Adrenal gland (tissue), 19 donors: ENCODE measurements at regions of chr3 and their contacts with region 1.

Region 1: GRCh38 chr3:55485211-55485791 is 1.8 kb downstream of the WNT5A start:
- DNase-seq: peak; percentile 55 to 70 (median 62)
- H3K4me3 ChIP-seq: peak overlapping the region in 1 of 4 donors; percentile 84
- H3K27ac ChIP-seq: peak overlapping the region in 1 of 5 donors; percentile 27
- H3K4me1 ChIP-seq: peaks cover 0 to 37% of the 10 kb centered on the region in 2 donors
- H3K27me3 ChIP-seq: peaks cover 66% of the 10 kb centered on the region
- CTCF ChIP-seq: peak; percentile 28 to 85 (median 52)
- POLR2A ChIP-seq: no peak

Region 2: GRCh38 chr3:55006244-55006676 is 479.0 kb before region 1 on chr3:
- intact Hi-C with region 1: no loop called
- DNase-seq: no peak
- H3K4me3 ChIP-seq: no peak overlapping the region
- H3K27ac ChIP-seq: no peak overlapping the region
- H3K4me1 ChIP-seq: no peaks in the 10 kb centered on the region
- H3K27me3 ChIP-seq: no peaks in the 10 kb centered on the region
- CTCF ChIP-seq: no peak
- POLR2A ChIP-seq: no peak

Region 3: GRCh38 chr3:55746808-55747413 is 261.6 kb after region 1 on chr3:
- intact Hi-C with region 1: loop called in 1 of 2 experiments (anchors 5 kb)
- DNase-seq: no peak
- H3K4me3 ChIP-seq: no peak overlapping the region
- H3K27ac ChIP-seq: no peak overlapping the region
- H3K4me1 ChIP-seq: no peaks in the 10 kb centered on the region
- H3K27me3 ChIP-seq: no peaks in the 10 kb centered on the region
- CTCF ChIP-seq: peak; percentile 23 to 56 (median 37)
- POLR2A ChIP-seq: no peak

Region 4: DNA sequence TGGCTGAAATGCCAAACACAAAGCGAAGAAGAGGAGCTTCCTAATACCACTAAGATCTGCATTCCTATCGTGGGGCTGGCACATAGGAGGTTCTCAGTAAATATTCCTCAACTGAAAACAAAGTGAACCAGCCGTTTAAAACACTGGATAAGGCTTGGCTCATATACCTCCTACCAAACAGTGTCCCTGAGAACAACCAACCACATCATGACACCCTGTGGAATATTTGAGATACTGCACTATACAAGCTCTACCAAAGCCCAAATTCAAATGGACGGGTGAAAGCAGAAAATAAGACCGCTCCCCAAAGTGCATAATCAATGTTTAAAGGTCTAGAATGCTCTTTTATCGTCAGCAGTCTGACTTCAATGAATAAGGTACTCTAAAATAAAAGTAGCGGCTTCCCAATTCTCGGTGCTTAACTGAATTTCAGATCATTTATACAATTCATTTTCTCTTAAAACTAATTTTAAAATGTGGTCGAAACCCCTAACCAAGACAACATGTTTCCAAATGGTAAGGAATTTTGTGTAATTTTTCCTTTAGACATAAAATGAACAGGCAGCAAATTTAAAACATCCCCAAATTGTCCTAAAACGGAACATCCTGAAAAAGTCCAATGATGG is 557.1 kb after region 1 on chr3:
- intact Hi-C with region 1: loop called in 1 of 2 experiments (anchors 5 kb)
- DNase-seq: no peak
- H3K4me3 ChIP-seq: no peak overlapping the region
- H3K27ac ChIP-seq: no peak overlapping the region
- H3K4me1 ChIP-seq: no peaks in the 10 kb centered on the region
- H3K27me3 ChIP-seq: peaks cover 7% of the 10 kb centered on the region
- CTCF ChIP-seq: peak; percentile 30 to 56 (median 50)
- POLR2A ChIP-seq: no peak

Region 5: DNA sequence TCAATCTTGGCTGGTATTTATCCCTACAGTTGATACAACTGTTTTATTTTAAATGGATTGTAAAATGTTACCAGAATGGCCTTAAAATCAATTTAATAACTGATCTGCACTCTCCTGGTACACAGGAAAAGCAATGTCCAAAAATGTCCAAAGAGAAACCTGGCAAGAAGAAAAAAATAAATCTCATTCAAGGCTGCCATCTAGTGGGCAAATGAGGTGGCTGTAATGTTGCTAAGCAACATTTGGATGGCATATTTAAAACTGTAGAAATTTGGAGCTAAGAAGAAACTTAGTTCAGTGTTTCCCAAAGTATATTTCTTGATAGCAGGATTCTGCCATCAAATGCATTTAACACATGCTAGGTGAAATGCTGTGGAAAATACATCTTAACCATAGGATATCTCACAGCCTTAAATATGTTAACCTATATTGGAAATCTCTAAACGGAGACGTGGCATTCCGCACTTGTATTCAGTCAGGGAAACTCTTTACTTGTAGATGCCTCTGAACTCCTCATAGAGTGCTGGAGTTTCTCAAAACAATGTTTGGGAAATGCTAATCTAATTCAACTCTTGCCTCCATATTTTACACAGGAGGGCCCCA is 766.1 kb after region 1 on chr3:
- intact Hi-C with region 1: loop called in 1 of 2 experiments (anchors 5 kb)
- DNase-seq: peak; percentile 14 to 73 (median 44)
- H3K4me3 ChIP-seq: no peak overlapping the region
- H3K27ac ChIP-seq: no peak overlapping the region
- H3K4me1 ChIP-seq: no peaks in the 10 kb centered on the region
- H3K27me3 ChIP-seq: no peaks in the 10 kb centered on the region
- CTCF ChIP-seq: peak; percentile 72 to 85 (median 74)
- POLR2A ChIP-seq: no peak